HCT116 (cell line): ENCODE measurements at regions of chr7 and their contacts with region 1.

Region 1: GRCh38 chr7:142496545-142497041 is 238.7 kb upstream of the PRSS58 start:
- DNase-seq: peak; percentile 42
- ATAC-seq: peak; percentile 89
- H3K4me3 ChIP-seq: peak overlapping the region in 1 of 2 experiments; percentile 13; a peak in 1 of 4 replicates
- H3K27ac ChIP-seq: no peak overlapping the region
- H3K4me1 ChIP-seq: peaks cover 0 to 10% of the 10 kb centered on the region in 2 experiments; a peak in 1 of 4 replicates
- H3K27me3 ChIP-seq: no peaks in the 10 kb centered on the region
- CTCF ChIP-seq: peak; percentile 66 to 91 (median 75)
- POLR2A ChIP-seq: no peak
- RAD21 ChIP-seq: peak; percentile 77

Region 2: DNA sequence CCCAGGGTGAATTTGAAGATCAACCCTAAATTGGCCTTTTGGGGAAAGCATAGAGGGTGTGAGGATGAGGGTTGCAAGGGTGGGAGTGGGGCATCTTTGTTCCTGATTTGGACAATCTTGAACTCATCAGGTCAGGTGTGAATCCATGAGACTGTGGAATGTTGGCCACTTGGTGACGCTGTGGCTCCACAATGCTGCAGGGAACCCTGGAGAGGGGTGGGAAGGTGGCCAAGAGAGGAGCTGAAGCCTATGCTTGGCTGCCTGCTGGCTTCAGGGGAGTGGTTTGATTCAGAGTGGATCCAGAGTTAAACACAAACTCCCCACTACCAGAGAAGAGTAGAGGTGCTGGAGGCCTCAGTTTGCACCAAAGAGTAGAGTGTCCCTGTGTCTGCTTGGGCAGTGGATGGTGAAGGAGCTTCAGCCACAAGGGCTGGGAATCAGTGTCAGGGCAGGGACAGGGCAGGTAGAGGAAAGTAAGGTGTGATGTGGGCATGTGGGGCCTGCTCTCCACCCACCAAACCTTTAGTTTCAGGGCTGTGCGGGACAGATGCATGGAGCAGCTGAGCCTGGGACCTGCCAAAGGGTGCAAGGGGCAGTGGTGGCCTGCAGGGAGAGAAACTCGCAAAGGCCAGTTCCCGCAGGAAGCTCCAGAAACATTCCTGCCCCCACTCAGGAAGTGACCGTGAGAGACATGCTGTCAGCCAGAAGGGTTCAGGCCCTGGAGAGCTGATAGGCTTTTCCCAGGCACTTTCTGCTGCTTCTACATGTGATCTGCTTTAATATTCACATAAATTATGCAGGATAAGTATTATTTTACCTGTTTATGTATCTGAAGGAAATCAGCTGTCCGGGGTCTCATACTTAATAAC is 157.7 kb before region 1 on chr7:
- CTCF ChIA-PET with region 1: interaction called, 16 read pairs
- POLR2A ChIA-PET with region 1: no interaction called
- RAD21 ChIA-PET with region 1: no interaction called
- intact Hi-C with region 1: no loop called
- DNase-seq: peak; percentile 48
- ATAC-seq: peak; percentile 99
- H3K4me3 ChIP-seq: no peak overlapping the region
- H3K27ac ChIP-seq: no peak overlapping the region
- H3K4me1 ChIP-seq: 0 out of 4 replicates have a peak, but pooled peaks cover 0 to 3% of the 10 kb centered on the region in 2 experiments
- H3K27me3 ChIP-seq: no peaks in the 10 kb centered on the region
- CTCF ChIP-seq: peak; percentile 72 to 79 (median 77)
- POLR2A ChIP-seq: no peak
- RAD21 ChIP-seq: peak; percentile 82

Region 3: GRCh38 chr7:142478479-142479072 is 18.0 kb before region 1 on chr7:
- CTCF ChIA-PET with region 1: interaction called, 16 read pairs
- POLR2A ChIA-PET with region 1: interaction called, 5 read pairs
- RAD21 ChIA-PET with region 1: no interaction called
- intact Hi-C with region 1: no loop called
- DNase-seq: peak; percentile 48
- ATAC-seq: peak; percentile 87
- H3K4me3 ChIP-seq: no peak overlapping the region
- H3K27ac ChIP-seq: no peak overlapping the region
- H3K4me1 ChIP-seq: peaks cover 0 to 4% of the 10 kb centered on the region in 2 experiments; a peak in 2 of 4 replicates
- H3K27me3 ChIP-seq: no peaks in the 10 kb centered on the region
- CTCF ChIP-seq: peak; percentile 69 to 78 (median 78)
- POLR2A ChIP-seq: no peak
- RAD21 ChIP-seq: peak; percentile 61

Region 4: DNA sequence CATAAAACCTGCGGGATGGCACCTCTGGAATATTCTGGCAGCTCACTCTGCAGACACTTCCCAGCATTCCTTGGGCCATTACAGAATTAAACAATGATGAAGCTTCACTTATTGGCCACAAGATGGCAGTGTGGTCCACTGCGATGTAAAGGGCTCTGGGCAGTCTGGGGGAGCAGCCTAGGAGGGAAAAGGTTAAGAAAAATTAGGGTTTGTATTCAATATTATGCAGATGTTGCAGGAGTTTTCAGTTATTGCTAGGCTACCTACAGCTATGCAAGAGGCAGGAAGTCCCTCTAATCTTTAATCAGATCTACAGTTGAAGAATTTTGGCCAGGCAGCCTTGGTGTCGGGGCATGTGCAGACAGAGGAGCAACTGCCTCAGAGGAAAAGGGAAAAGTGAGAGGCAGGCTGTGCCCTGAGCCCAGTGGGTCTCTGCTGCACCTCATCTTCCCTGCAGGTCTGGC is 19.5 kb after region 1 on chr7:
- CTCF ChIA-PET with region 1: interaction called, 17 read pairs
- POLR2A ChIA-PET with region 1: no interaction called
- RAD21 ChIA-PET with region 1: interaction called in 1 of 2 experiments, 4 read pairs
- intact Hi-C with region 1: no loop called
- DNase-seq: peak; percentile 61
- ATAC-seq: peak; percentile 97
- H3K4me3 ChIP-seq: no peak overlapping the region
- H3K27ac ChIP-seq: no peak overlapping the region
- H3K4me1 ChIP-seq: peaks cover 0 to 19% of the 10 kb centered on the region in 2 experiments; a peak in 2 of 4 replicates
- H3K27me3 ChIP-seq: no peaks in the 10 kb centered on the region
- CTCF ChIP-seq: peak; percentile 77 to 89 (median 88)
- POLR2A ChIP-seq: no peak
- RAD21 ChIP-seq: peak; percentile 81